ENCODE measurements at regions of chr5 and their contacts with region 1.

Region 1: GRCh38 chr5:181184857-181185251 is 20.1 kb downstream of the TRIM7 start:
- DNase-seq: no peak
- H3K4me3 Mint-ChIP-seq: peak overlapping the region; percentile 86
- H3K27ac Mint-ChIP-seq: peak overlapping the region; percentile 98
- H3K4me1 Mint-ChIP-seq: peaks cover 55% of the 10 kb centered on the region
- H3K27me3 Mint-ChIP-seq: peaks cover 5% of the 10 kb centered on the region

Region 2: GRCh38 chr5:181167814-181168488 is 16.9 kb before region 1 on chr5:
- CTCF ChIA-PET with region 1: interaction called, 22 read pairs
- POLR2A ChIA-PET with region 1: interaction called, 4 read pairs
- DNase-seq: peak; percentile 29
- H3K4me3 Mint-ChIP-seq: no peak overlapping the region
- H3K27ac Mint-ChIP-seq: no peak overlapping the region
- H3K4me1 Mint-ChIP-seq: peaks cover 87% of the 10 kb centered on the region
- H3K27me3 Mint-ChIP-seq: peaks cover 31% of the 10 kb centered on the region

Region 3: GRCh38 chr5:181173420-181174342 is 11.2 kb before region 1 on chr5:
- CTCF ChIA-PET with region 1: interaction called, 22 read pairs
- POLR2A ChIA-PET with region 1: interaction called, 4 read pairs
- DNase-seq: peak; percentile 75
- H3K4me3 Mint-ChIP-seq: peak overlapping the region; percentile 91
- H3K27ac Mint-ChIP-seq: peak overlapping the region; percentile 98
- H3K4me1 Mint-ChIP-seq: peaks cover 50% of the 10 kb centered on the region
- H3K27me3 Mint-ChIP-seq: peaks cover 37% of the 10 kb centered on the region

Region 4: DNA sequence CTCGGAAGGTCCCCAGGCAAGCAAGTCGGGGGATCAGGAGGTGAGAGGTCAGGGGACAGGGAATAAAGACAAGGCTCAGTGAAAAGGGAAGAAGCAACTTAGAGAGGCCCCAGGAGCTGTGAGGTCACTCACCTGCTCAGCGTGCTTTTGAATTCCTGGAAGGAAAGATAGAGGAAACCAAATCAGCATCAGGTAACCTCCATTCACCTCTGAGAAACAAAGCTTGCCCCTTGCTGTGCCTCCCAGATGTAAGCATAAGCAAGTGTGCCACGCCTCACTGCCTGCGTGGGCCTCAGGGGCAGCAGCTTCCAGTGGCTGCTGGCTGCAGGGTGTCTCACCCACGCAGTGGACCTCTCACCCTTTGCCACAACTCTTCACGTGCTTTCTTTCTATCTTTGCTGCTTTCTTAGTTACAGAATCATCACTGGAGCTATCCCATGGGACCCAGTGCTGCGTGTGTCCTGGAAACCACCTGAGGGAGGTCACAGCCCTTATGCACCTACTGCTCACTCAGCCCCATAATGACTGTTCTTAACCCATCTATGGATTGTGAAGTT is 14.2 kb after region 1 on chr5:
- CTCF ChIA-PET with region 1: interaction called, 90 read pairs
- POLR2A ChIA-PET with region 1: no interaction called
- DNase-seq: no peak
- H3K4me3 Mint-ChIP-seq: no peak overlapping the region
- H3K27ac Mint-ChIP-seq: no peak overlapping the region
- H3K4me1 Mint-ChIP-seq: peaks cover 4% of the 10 kb centered on the region
- H3K27me3 Mint-ChIP-seq: peaks cover 40% of the 10 kb centered on the region

Region 5: DNA sequence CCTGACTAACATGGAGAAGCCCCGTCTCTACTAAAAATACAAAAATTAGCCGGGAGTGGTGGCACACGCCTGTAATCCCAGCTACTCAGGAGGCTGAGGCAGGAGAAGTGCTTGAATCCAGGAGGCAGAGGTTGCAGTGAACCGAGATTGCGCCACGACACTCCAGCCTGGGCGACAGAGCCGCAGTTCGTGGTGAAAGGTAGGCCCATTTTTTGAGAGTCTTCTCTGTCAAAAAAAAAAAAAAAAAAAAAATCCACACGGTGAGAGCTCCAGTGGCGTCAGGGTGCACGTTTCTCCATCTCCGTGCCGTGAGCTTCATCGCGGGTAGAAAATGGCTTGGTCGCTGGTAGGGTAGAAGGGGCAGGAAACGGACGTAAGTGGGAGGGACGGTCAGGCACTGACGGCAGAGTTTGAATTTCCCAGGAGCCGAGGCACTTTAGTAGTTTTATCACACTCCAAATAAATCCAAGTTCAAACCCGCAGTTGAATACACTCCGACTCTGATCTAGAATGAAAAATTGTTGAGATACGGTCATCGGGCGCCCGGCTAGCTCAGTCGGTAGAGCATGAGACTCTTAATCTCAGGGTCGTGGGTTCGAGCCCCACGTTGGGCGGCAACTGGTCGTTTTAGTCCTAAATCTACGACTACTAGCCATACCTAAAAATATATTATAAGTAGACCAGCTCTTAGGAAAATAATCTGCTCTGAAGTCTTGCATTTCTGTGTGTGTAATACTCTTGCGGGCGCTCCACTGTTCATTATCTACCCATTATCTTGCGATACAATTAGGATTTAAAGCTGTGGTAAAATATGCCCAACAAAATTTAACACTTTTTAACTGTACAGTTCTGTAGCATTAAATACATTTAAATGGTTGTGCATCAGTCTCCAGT is 22.6 kb after region 1 on chr5:
- CTCF ChIA-PET with region 1: interaction called, 90 read pairs
- POLR2A ChIA-PET with region 1: interaction called, 11 read pairs
- DNase-seq: peak; percentile 70
- H3K4me3 Mint-ChIP-seq: peak overlapping the region; percentile 74
- H3K27ac Mint-ChIP-seq: peak overlapping the region; percentile 79
- H3K4me1 Mint-ChIP-seq: peaks cover 34% of the 10 kb centered on the region
- H3K27me3 Mint-ChIP-seq: peaks cover 31% of the 10 kb centered on the region

Region 6: GRCh38 chr5:181246276-181247050 is 61.6 kb after region 1 on chr5:
- CTCF ChIA-PET with region 1: interaction called, 10 read pairs
- POLR2A ChIA-PET with region 1: no interaction called
- DNase-seq: peak; percentile 75
- H3K4me3 Mint-ChIP-seq: peak overlapping the region; percentile 98
- H3K27ac Mint-ChIP-seq: peak overlapping the region; percentile 94
- H3K4me1 Mint-ChIP-seq: peaks cover 70% of the 10 kb centered on the region
- H3K27me3 Mint-ChIP-seq: no peaks in the 10 kb centered on the region

Measured in activated CD4-positive, alpha-beta T cell treated with anti-CD3 and anti-CD28 coated beads, Interleukin-2, amount 10 ng/mL, durations not matched to agents 7 days and 5 days (primary cell).